ENCODE measurements at regions of chr10 and their contacts with region 1.

Region 1: GRCh38 chr10:100009793-100010676 is at the start of gene DNMBP:
- DNase-seq: peak; percentile 92
- total RNA-seq, gene DNMBP: 5.6 TPM

Region 2: GRCh38 chr10:99620713-99621453 is 389.2 kb before region 1 on chr10:
- intact Hi-C with region 1: no loop called
- DNase-seq: peak; percentile 97

Region 3: GRCh38 chr10:99845837-99846382 is 164.1 kb before region 1 on chr10:
- intact Hi-C with region 1: loop called (anchors 1 kb)
- DNase-seq: no peak

Region 4: GRCh38 chr10:99976886-99977665 is 33.0 kb before region 1 on chr10:
- intact Hi-C with region 1: loop called (anchors 2 kb)
- DNase-seq: no peak

Region 5: GRCh38 chr10:100046021-100046486 is 36.0 kb after region 1 on chr10:
- intact Hi-C with region 1: loop called (anchors 2 kb)
- DNase-seq: peak; percentile 92

Region 6: DNA sequence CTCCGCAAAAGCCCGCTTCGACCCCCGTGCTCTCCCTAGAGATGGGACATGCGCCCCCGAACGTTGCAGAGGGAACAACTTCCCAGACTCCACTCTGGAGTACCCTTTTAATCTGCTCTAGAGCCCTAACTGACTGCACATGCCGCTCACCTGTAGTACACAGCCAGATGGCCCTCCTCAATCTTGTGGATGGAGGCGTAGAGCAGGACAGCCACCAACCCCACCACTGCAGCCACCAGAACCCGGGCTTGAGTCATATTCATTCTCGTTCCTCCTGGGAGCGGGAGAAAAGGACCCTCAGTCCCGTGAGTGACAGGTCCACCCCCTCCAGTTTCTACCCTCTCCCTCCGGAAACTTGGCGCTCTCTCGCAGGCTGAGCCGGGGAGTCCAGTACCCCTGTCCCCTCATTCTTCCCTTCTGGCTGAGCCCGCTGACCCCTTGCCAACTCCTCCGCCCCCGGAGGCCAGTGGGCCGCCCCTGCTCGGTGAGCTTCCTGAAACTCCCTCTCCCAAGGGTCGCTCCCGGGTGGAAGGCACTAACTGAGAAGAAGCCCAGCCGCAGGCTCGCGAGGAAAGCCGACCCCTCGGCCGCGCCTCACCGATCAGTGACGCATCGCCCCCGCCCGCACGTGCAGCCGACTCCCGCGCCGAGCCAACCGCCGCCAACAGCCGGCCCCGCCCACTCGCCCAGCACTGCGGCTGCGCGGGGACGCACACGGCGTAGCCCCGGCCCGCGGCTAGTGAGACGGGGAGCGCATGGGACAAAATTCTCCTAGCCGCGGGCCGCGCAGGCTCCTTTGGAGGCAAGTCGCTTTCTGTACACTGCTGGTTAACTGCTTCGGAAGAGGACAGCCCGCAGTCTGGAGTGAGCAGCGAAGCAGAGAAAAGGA is 175.6 kb after region 1 on chr10 and contains the start of gene ERLIN1:
- intact Hi-C with region 1: loop called (anchors 10 kb)
- DNase-seq: peak; percentile 96
- total RNA-seq, gene ERLIN1: 7.2 TPM

Measured in cardiac septum (tissue), 1 donor.